H1 (cell line): ENCODE measurements at regions of chr5 and their contacts with region 1.

Region 1: GRCh38 chr5:138503487-138504270 is 38.4 kb downstream of the EGR1 start:
- DNase-seq: no peak
- H3K4me3 ChIP-seq: no peak overlapping the region
- H3K27ac ChIP-seq: no peak overlapping the region
- H3K4me1 ChIP-seq: no peaks in the 10 kb centered on the region
- H3K27me3 ChIP-seq: no peaks in the 10 kb centered on the region
- CTCF ChIP-seq: peak; percentile 55 to 90 (median 85)
- EP300 ChIP-seq: no peak
- POLR2A ChIP-seq: 0 out of 3 replicates have a peak, but pooled peaks of 1 of the 2 experiments have one; percentile 33
- RAD21 ChIP-seq: peak; percentile 85 to 88

Region 2: DNA sequence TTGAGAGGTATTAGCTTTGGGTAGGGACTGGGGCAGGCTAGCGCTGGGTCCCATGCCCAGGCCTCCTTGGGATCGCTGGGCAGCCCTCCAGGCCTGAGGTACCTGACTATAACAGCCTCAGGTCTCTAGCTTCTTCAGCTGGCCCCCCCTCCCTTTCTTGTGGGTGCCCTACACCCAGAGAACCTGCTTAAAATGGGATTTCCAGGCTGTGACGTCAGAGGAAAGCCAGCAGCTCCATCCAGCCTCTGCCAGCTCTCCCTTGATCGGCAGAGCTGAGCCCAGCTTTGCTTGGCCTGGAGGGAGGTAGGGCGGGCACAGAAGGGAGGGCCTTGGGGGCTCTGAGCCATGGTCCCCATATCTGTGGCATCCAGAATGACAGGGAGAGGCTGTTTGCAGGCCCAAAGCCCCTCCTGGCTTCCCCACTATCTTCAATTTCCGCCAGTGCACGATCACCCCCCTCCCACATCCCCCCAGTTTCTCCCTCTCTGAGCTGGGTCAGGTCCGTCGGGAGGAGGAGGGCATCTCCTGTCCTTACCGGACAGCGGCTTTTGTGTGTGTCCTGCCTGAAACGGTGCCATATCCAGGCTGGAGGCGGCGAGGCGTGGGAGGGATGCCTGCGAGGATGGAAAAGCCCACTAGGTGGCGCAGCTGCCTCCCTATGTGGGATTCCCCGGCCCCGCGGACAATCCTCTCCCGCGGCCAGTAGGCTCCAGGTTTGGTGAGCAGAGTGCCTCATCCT is 54.0 kb before region 1 on chr5:
- CTCF ChIA-PET with region 1: interaction called, 532 read pairs
- POLR2A ChIA-PET with region 1: interaction called, 28 read pairs
- DNase-seq: peak in 1 of 2 experiments; percentile 99
- H3K4me3 ChIP-seq: peak overlapping the region in 1 of 4 experiments; percentile 27; a peak in 1 of 8 replicates
- H3K27ac ChIP-seq: no peak overlapping the region
- H3K4me1 ChIP-seq: peaks cover 0 to 15% (median 7%) of the 10 kb centered on the region in 4 experiments; a peak in 5 of 7 replicates
- H3K27me3 ChIP-seq: peaks cover 0 to 1% (median 0%) of the 10 kb centered on the region in 4 experiments; a peak in 1 of 7 replicates
- CTCF ChIP-seq: peak in 2 of 3 experiments; percentile 95 to 97; a peak in 3 of 4 replicates
- EP300 ChIP-seq: no peak
- POLR2A ChIP-seq: no peak
- RAD21 ChIP-seq: peak; percentile 83 to 88

Region 3: GRCh38 chr5:138469540-138470321 is 33.9 kb before region 1 on chr5:
- CTCF ChIA-PET with region 1: interaction called, 532 read pairs
- POLR2A ChIA-PET with region 1: interaction called, 294 read pairs
- DNase-seq: peak in 1 of 2 experiments; percentile 31
- H3K4me3 ChIP-seq: no peak overlapping the region
- H3K27ac ChIP-seq: no peak overlapping the region
- H3K4me1 ChIP-seq: peaks cover 2 to 11% (median 5%) of the 10 kb centered on the region in 4 experiments
- H3K27me3 ChIP-seq: peaks cover 0 to 15% (median 13%) of the 10 kb centered on the region in 4 experiments; a peak in 5 of 7 replicates
- CTCF ChIP-seq: no peak
- EP300 ChIP-seq: no peak
- POLR2A ChIP-seq: peak in 1 of 2 experiments; percentile 93; a peak in 2 of 3 replicates
- RAD21 ChIP-seq: no peak

Region 4: DNA sequence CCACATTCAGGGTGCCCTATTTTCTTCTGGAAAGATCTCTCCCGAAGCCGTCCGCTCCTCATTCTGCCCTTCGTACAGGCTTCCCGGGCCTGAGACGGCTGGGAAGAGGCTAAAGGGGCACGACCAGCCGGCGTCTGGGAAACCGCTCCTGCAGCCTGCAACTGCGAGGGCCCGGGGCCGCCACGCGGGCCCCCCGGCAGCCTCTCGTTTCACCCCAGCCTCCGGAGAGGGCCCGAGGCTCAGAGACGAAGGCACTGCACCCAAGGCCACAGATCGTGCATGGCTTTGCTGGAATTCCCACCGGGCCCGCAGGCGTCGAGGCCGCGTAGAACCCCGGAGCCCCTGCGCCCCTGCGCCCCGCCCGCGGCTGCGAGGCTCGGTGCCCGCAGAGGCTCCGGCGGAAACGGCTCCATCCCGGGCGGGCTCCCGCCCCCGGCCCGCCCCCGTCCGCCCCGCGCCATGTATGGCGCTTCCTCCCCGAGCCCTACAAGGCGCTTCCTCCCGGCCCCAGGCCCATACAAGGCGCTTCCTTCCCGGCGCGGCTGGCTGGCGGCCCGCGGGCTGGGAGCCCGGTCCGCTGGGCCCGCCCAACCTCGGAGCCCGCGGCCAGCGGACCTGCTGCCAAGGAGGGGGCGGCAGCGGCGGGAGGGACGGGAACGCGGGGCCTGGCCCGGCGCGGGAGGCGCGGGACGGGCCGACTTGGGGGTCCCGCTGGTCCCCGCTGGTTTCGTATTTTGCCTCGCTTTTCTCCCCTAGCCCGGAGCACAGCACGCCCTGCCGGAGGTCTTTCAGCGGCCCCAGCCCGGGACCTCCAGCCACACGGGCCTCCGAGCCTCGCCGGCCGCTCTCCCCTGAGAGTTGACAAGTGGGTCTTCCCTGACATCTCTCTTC is 11.8 kb before region 1 on chr5:
- CTCF ChIA-PET with region 1: interaction called, 28 read pairs
- POLR2A ChIA-PET with region 1: interaction called, 15 read pairs
- DNase-seq: peak in 1 of 2 experiments; percentile 82
- H3K4me3 ChIP-seq: peak overlapping the region; percentile 40 to 63 (median 53)
- H3K27ac ChIP-seq: no peak overlapping the region; the same call in 1 of the 2 replicates
- H3K4me1 ChIP-seq: peaks cover 3 to 21% (median 13%) of the 10 kb centered on the region in 4 experiments
- H3K27me3 ChIP-seq: peaks cover 0 to 21% (median 17%) of the 10 kb centered on the region in 4 experiments; a peak in 5 of 7 replicates
- CTCF ChIP-seq: no peak
- EP300 ChIP-seq: no peak
- POLR2A ChIP-seq: 0 out of 3 replicates have a peak, but pooled peaks of 1 of the 2 experiments have one; percentile 41
- RAD21 ChIP-seq: no peak

Region 5: DNA sequence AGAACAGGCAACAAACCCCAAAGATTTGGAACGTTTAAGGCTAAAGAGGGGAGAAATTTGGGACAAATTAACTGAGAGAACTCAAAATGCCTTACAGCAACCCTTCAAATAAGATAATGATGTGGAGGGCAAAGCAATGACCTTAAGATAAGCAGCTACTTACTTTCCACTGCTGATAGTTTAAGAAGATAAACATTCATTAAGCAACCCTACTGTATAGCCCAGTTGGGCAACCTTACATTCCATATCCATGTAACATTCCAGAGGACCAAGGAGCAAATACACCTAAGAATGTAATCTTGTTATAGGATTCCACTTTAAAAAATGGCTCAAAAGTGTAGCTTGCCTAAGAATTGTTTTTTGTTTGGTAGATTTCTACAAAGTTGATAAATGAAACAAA is 24.5 kb after region 1 on chr5:
- CTCF ChIA-PET with region 1: interaction called, 27 read pairs
- POLR2A ChIA-PET with region 1: interaction called, 12 read pairs
- DNase-seq: no peak
- H3K4me3 ChIP-seq: no peak overlapping the region
- H3K27ac ChIP-seq: no peak overlapping the region
- H3K4me1 ChIP-seq: peaks cover 0 to 10% (median 1%) of the 10 kb centered on the region in 4 experiments; a peak in 3 of 7 replicates
- H3K27me3 ChIP-seq: no peaks in the 10 kb centered on the region
- CTCF ChIP-seq: no peak
- EP300 ChIP-seq: no peak
- POLR2A ChIP-seq: no peak
- RAD21 ChIP-seq: no peak

Region 6: GRCh38 chr5:138869763-138870500 is 366.3 kb after region 1 on chr5:
- CTCF ChIA-PET with region 1: no interaction called
- POLR2A ChIA-PET with region 1: no interaction called
- DNase-seq: no peak
- H3K4me3 ChIP-seq: no peak overlapping the region
- H3K27ac ChIP-seq: no peak overlapping the region
- H3K4me1 ChIP-seq: peaks cover 0 to 20% (median 15%) of the 10 kb centered on the region in 4 experiments; a peak in 5 of 7 replicates
- H3K27me3 ChIP-seq: no peaks in the 10 kb centered on the region
- CTCF ChIP-seq: no peak
- EP300 ChIP-seq: no peak
- POLR2A ChIP-seq: no peak
- RAD21 ChIP-seq: no peak